ENCODE measurements at regions of chr5 and their contacts with region 1.

Region 1: GRCh38 chr5:76601470-76601869 is 21.7 kb downstream of the F2RL2 start:
- DNase-seq: no peak
- H3K4me3 ChIP-seq: no peak overlapping the region
- H3K27ac ChIP-seq: no peak overlapping the region
- H3K27me3 ChIP-seq: peaks cover 0 to 3% (median 0%) of the 10 kb centered on the region in 45 donors
- CTCF ChIP-seq: peak; percentile 55 to 85 (median 77)

Region 2: DNA sequence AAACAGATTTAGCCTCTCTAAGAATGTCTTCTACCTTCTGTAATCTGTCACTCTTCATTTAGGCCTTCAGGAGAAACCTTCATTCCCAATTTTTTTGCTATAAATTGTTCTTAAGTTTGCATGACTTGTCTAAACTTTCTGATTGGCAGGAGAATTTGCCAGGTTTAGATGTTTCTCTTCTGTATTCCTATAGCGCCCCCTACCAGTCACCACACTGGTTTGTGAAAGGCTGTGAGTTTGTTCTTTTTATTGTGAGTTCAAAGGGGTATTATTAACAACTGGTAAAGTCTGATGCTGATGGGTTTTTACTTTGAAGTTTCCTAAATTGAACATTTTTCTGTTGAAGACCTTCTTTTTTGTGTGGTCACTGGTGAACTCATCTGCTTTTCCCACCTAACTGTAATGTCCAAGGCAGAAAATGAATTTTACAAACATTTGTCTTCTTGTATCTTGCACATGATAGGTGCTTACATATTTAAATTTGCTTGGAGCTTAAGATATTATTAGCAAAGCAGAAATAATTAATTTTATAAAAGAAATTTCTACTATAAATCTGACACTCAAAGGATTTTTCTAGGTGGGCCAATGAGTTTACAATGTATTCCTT is 40.1 kb after region 1 on chr5:
- intact Hi-C with region 1: loop called in 1 of 2 experiments (anchors 5 kb)
- DNase-seq: peak in 2 of 10 donors; percentile 30 to 36
- H3K4me3 ChIP-seq: no peak overlapping the region
- H3K27ac ChIP-seq: no peak overlapping the region
- H3K27me3 ChIP-seq: peaks cover 0 to 8% (median 0%) of the 10 kb centered on the region in 45 donors
- CTCF ChIP-seq: peak in 55 of 56 donors; percentile 24 to 74 (median 56)

Region 3: DNA sequence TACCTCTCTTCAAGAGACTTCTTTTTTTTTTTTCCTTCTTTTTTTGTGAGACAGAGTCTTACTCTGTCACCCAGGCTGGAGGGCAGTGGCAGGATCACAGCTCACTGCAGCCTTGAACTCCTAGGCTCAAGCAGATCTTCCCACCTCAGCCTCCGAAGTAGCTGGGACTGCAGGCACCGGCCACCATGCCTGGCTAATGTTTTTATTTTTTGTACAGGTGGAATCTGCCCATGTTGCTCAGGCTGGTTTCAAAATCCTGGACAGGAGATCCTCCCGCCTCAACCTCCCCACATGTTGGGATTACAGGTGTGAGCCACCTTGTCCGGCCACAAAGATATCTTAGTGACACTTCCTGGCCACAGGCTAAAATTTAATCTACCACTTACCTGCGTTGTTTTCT is 174.5 kb after region 1 on chr5:
- intact Hi-C with region 1: loop called in 1 of 2 experiments (anchors 5 kb)
- DNase-seq: no peak
- H3K4me3 ChIP-seq: no peak overlapping the region
- H3K27ac ChIP-seq: no peak overlapping the region
- H3K27me3 ChIP-seq: no peaks in the 10 kb centered on the region
- CTCF ChIP-seq: no peak

Region 4: GRCh38 chr5:77015938-77016569 is 414.6 kb after region 1 on chr5:
- intact Hi-C with region 1: loop called in 1 of 2 experiments (anchors 10 kb)
- DNase-seq: no peak
- H3K4me3 ChIP-seq: no peak overlapping the region
- H3K27ac ChIP-seq: no peak overlapping the region
- H3K27me3 ChIP-seq: peaks cover 0 to 3% (median 0%) of the 10 kb centered on the region in 45 donors
- CTCF ChIP-seq: peak in 54 of 56 donors; percentile 38 to 80 (median 59)